ENCODE measurements at regions of chr1 and their contacts with region 1.

Region 1: GRCh38 chr1:231124746-231125145 is 37.1 kb upstream of the TRIM67 start:
- DNase-seq: peak in 7 of 10 donors; percentile 15 to 58 (median 54)
- H3K4me3 ChIP-seq: peak overlapping the region in 1 of 59 donors; percentile 3
- H3K27ac ChIP-seq: peak overlapping the region in 27 of 59 donors; percentile 4 to 77 (median 47)
- H3K27me3 ChIP-seq: peaks cover 0 to 7% (median 0%) of the 10 kb centered on the region in 45 donors
- CTCF ChIP-seq: no peak

Region 2: GRCh38 chr1:231162297-231162969 is 37.7 kb after region 1 on chr1:
- intact Hi-C with region 1: loop called in 1 of 2 experiments (anchors 5 kb)
- DNase-seq: peak in 4 of 10 donors; percentile 21 to 57 (median 48)
- H3K4me3 ChIP-seq: peak overlapping the region; percentile 39 to 76 (median 61)
- H3K27ac ChIP-seq: peak overlapping the region in 14 of 59 donors; percentile 2 to 57 (median 26)
- H3K27me3 ChIP-seq: peaks cover 0 to 25% (median 0%) of the 10 kb centered on the region in 45 donors
- CTCF ChIP-seq: peak in 9 of 56 donors; percentile 7 to 21 (median 13)

Region 3: GRCh38 chr1:231188072-231188471 is 63.3 kb after region 1 on chr1:
- intact Hi-C with region 1: loop called in 1 of 2 experiments (anchors 2 kb)
- DNase-seq: peak in 2 of 10 donors; percentile 19 to 55
- H3K4me3 ChIP-seq: peak overlapping the region in 34 of 59 donors; percentile 4 to 54 (median 33)
- H3K27ac ChIP-seq: peak overlapping the region; percentile 15 to 92 (median 83)
- H3K27me3 ChIP-seq: peaks cover 0 to 4% (median 0%) of the 10 kb centered on the region in 45 donors
- CTCF ChIP-seq: no peak